ENCODE measurements at regions of chr1 and their contacts with region 1.

Region 1: GRCh38 chr1:246724016-246724730 is at the start of gene SCCPDH:
- DNase-seq: peak; percentile 18 to 71 (median 48)
- ATAC-seq: peak; percentile 92 to 93 (median 93)
- H3K4me3 ChIP-seq: peak within 1 kb of the TSS; percentile 45 to 91
- H3K4me3 Mint-ChIP-seq: peak within 1 kb of the TSS; percentile 82 to 91 (median 86)
- H3K27ac ChIP-seq: no peak within 1 kb of the TSS
- H3K27ac Mint-ChIP-seq: peak within 1 kb of the TSS; percentile 60 to 61
- H3K4me1 ChIP-seq: peaks cover 4 to 11% of the 10 kb centered on the region in 2 experiments
- H3K4me1 Mint-ChIP-seq: peaks cover 8 to 11% (median 9%) of the 10 kb centered on the region in 3 donors
- H3K27me3 ChIP-seq: peaks cover 0 to 19% of the 10 kb centered on the region in 2 experiments
- H3K27me3 Mint-ChIP-seq: peaks cover 0 to 5% of the 10 kb centered on the region in 2 donors
- total RNA-seq, gene SCCPDH: 3.7 to 6.2 (median 4.5) TPM

Region 2: GRCh38 chr1:245673881-245674414 is 1050.2 kb before region 1 on chr1:
- CTCF ChIA-PET with region 1: no interaction called
- POLR2A ChIA-PET with region 1: no interaction called
- DNase-seq: no peak
- ATAC-seq: no peak
- H3K4me3 ChIP-seq: no peak overlapping the region
- H3K4me3 Mint-ChIP-seq: no peak overlapping the region
- H3K27ac ChIP-seq: no peak overlapping the region
- H3K27ac Mint-ChIP-seq: no peak overlapping the region
- H3K4me1 ChIP-seq: no peaks in the 10 kb centered on the region
- H3K4me1 Mint-ChIP-seq: no peaks in the 10 kb centered on the region
- H3K27me3 ChIP-seq: no peaks in the 10 kb centered on the region
- H3K27me3 Mint-ChIP-seq: no peaks in the 10 kb centered on the region

Region 3: DNA sequence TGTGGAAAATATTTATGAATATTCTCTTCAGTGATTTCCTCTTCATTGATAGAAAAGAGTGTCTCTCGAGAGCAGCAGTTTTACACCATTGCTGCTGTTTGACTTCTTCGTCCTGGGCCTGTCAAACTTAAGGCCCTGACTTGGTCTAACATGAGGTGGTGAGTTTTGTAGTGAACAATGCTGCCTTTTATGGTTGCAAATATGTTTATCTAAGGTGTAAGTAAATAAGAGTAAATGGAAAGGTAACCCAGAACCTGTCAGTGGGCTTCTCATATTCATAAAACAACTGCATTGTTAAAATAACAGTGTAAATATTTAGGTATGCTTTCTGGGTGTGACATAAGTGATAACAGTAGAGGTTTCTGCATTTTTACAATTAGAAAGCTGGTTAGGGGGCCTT is 62.7 kb before region 1 on chr1:
- CTCF ChIA-PET with region 1: no interaction called
- POLR2A ChIA-PET with region 1: no interaction called
- DNase-seq: no peak
- ATAC-seq: no peak
- H3K4me3 ChIP-seq: no peak overlapping the region
- H3K4me3 Mint-ChIP-seq: no peak overlapping the region
- H3K27ac ChIP-seq: no peak overlapping the region
- H3K27ac Mint-ChIP-seq: no peak overlapping the region
- H3K4me1 ChIP-seq: no peaks in the 10 kb centered on the region
- H3K4me1 Mint-ChIP-seq: no peaks in the 10 kb centered on the region
- H3K27me3 ChIP-seq: no peaks in the 10 kb centered on the region
- H3K27me3 Mint-ChIP-seq: no peaks in the 10 kb centered on the region

Region 4: DNA sequence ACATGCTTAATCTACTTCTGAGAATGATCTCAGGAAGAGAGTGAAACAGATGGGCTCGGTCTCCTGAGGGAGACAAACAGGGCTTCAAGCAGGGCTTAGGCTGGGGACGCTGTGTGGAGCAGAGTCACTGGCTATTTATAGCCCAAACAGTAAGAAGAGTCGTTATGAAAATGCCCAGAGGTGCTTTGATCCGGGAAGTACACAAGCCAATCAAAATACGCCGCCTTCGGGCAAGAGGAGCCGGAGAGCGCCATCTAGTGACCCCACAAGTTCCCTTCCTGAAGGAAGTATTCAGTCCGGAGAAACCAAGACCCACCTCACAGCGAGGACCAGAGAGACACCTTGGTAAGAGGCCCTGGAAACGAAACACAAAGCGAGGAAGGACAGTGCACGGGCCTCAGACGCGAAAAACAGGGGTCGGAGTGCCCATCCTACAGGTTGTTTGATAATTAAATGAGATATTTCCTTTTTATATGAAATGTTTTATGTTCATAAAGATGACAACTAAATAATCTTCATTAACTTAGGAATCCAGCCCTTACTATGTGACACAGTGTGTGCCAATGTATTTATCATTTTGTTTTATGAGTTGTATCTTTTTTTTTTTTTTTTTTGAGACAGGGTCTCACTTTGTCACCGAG is 25.0 kb before region 1 on chr1:
- CTCF ChIA-PET with region 1: no interaction called
- POLR2A ChIA-PET with region 1: interaction called in 1 of 2 experiments, 14 read pairs
- DNase-seq: peak; percentile 46 to 90 (median 70)
- ATAC-seq: peak; percentile 79 to 95 (median 91)
- H3K4me3 ChIP-seq: peak overlapping the region; percentile 9 to 49
- H3K4me3 Mint-ChIP-seq: peak overlapping the region; percentile 4 to 68 (median 50)
- H3K27ac ChIP-seq: no peak overlapping the region
- H3K27ac Mint-ChIP-seq: peak overlapping the region in 1 of 2 donors; percentile 23
- H3K4me1 ChIP-seq: peaks cover 2 to 11% of the 10 kb centered on the region in 2 experiments
- H3K4me1 Mint-ChIP-seq: peaks cover 6 to 8% (median 6%) of the 10 kb centered on the region in 3 donors
- H3K27me3 ChIP-seq: peaks cover 0 to 15% of the 10 kb centered on the region in 2 experiments
- H3K27me3 Mint-ChIP-seq: peaks cover 0 to 3% of the 10 kb centered on the region in 2 donors

Region 5: DNA sequence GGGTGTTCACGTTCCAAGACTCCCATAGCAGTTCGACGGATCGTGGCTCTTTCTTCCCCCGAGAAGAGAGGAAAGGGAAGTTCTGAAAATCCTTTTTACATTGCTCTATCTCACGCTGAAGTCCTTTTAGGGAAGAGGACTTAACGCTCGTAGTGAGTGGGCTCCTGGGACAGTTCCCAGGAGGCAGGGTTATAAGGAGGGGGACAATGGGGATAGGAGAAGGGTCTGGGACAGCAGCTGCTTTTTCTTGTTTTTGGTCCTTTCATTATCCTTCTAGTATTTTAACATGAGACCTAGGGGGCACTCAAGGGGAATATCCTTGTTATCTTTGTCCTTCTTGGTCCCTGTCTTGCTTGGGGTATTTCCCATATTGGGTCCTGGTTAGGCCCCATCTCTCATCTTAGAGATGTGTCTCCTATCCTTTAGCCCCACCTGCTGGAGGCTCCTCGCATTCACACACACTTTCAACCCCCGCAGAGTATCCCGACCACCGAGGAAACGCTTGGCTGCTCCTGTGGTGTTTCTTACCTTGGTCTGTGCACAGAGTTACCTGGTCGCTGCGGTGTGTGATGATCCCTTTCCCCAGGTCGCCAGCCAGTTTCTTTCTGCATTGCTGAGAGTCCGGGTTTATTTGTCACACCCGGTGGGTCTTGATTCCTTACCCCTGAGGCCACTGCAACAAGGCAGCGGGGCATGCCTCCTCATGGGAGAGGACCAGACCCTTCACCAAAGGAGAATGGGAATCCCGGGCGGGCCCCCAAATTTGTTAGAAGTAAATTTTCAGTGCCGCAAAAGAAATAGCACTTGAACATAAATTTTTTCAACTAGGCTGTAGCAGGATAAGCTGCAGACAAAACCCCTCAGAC is 29.7 kb after region 1 on chr1:
- CTCF ChIA-PET with region 1: no interaction called
- POLR2A ChIA-PET with region 1: no interaction called
- DNase-seq: peak; percentile 13 to 72 (median 43)
- ATAC-seq: peak; percentile 44 to 78 (median 52)
- H3K4me3 ChIP-seq: no peak overlapping the region
- H3K4me3 Mint-ChIP-seq: no peak overlapping the region
- H3K27ac ChIP-seq: no peak overlapping the region
- H3K27ac Mint-ChIP-seq: no peak overlapping the region
- H3K4me1 ChIP-seq: no peaks in the 10 kb centered on the region
- H3K4me1 Mint-ChIP-seq: no peaks in the 10 kb centered on the region
- H3K27me3 ChIP-seq: no peaks in the 10 kb centered on the region
- H3K27me3 Mint-ChIP-seq: no peaks in the 10 kb centered on the region

Region 6: DNA sequence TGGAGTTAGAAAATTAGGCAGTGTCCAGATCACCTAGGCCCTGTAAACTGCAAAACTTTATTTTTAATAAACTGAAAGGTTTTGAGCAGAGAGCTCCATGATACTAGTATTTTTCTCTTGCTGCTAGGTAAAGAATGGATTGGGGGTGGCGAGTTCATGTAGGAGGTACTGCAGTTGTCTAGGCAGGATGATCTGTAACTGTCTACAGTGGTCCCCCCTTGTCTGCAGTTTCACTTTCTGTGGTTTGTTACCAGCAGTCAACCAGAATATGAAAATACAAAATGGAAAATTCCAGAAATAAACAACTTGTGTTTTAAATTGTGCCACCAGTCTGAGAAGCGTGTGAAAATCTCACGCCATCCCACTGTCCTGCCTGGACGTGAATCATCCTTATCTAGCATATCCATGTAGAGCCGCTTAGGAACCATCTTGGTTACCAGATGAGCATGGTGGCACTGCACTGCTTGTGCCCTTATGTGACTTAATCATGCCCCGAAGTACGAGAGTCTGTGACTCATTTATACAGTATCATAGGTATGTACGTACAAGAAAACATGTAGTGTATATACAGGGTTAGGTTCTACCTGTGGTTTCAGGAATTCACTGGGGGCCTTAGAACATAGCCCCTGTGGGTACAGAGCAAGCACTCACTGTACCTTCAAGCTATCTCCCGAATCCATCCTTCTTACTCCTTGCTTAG is 113.4 kb after region 1 on chr1:
- CTCF ChIA-PET with region 1: no interaction called
- POLR2A ChIA-PET with region 1: no interaction called
- DNase-seq: no peak
- ATAC-seq: peak in 1 of 4 experiments; percentile 13
- H3K4me3 ChIP-seq: no peak overlapping the region
- H3K4me3 Mint-ChIP-seq: no peak overlapping the region
- H3K27ac ChIP-seq: no peak overlapping the region
- H3K27ac Mint-ChIP-seq: peak overlapping the region in 1 of 2 donors; percentile 5
- H3K4me1 ChIP-seq: no peaks in the 10 kb centered on the region
- H3K4me1 Mint-ChIP-seq: peaks cover 0 to 7% (median 2%) of the 10 kb centered on the region in 3 donors
- H3K27me3 ChIP-seq: peaks cover 0 to 5% of the 10 kb centered on the region in 2 experiments
- H3K27me3 Mint-ChIP-seq: peaks cover 3 to 4% of the 10 kb centered on the region in 2 donors